WTC11 (cell line): ENCODE measurements at regions of chr12 and their contacts with region 1.

Region 1: DNA sequence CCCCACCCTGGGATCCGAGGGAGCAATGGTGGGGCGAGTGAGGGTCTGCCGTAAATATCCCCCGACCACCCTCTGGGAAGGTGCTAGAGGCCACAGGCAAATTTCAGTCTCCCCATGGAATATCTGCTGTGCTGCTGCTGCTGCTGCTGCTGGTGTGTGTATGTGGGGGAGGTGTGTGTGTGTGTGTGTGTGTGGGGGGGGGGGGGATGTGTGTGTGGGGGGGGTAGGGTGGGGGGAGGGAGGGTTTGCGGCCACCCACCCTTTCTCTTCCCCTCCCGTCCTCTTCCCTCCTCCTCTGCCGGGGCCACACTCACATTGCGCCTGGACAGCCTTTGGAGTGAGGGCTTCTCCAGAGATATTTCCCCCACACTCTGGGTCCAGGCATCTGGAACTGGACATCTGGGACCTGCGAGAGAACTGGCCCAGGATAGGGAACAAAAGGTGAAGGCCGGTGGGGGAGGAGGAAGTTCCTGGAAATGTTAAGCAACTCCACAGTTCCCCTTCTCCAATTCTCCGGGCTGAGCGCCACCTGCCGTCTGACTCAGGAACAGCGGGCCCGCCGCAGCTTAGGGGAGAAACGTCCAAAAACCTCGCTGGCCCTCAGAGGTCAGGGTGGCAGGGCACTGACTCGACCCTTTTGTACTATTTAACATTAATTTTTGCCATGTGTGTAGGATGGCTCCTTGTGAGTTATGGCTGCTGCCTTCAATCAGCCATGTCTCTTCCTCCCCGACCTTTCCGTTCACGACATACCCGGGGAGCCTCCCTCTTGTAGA is at the start of gene C1RL:
- DNase-seq: peak; percentile 95
- ATAC-seq: peak; percentile 60
- H3K4me3 Mint-ChIP-seq: peak within 1 kb of the TSS; percentile 89
- H3K27ac Mint-ChIP-seq: peak within 1 kb of the TSS; percentile 78
- H3K4me1 Mint-ChIP-seq: peaks cover 12% of the 10 kb centered on the region
- H3K27me3 Mint-ChIP-seq: no peaks in the 10 kb centered on the region
- CTCF ChIP-seq: peak; percentile 92
- total RNA-seq, gene C1RL: 17.7 to 23.7 TPM (median 22.9 TPM) in 3 replicates

Region 2: GRCh38 chr12:6944381-6945186 is 164.4 kb before region 1 on chr12:
- CTCF ChIA-PET with region 1: interaction called, 59 read pairs
- POLR2A ChIA-PET with region 1: interaction called, 19 read pairs
- DNase-seq: peak; percentile 92
- ATAC-seq: peak; percentile 25
- H3K4me3 Mint-ChIP-seq: peak overlapping the region; percentile 98
- H3K27ac Mint-ChIP-seq: peak overlapping the region; percentile 99
- H3K4me1 Mint-ChIP-seq: peaks cover 34% of the 10 kb centered on the region
- H3K27me3 Mint-ChIP-seq: no peaks in the 10 kb centered on the region
- CTCF ChIP-seq: no peak

Region 3: DNA sequence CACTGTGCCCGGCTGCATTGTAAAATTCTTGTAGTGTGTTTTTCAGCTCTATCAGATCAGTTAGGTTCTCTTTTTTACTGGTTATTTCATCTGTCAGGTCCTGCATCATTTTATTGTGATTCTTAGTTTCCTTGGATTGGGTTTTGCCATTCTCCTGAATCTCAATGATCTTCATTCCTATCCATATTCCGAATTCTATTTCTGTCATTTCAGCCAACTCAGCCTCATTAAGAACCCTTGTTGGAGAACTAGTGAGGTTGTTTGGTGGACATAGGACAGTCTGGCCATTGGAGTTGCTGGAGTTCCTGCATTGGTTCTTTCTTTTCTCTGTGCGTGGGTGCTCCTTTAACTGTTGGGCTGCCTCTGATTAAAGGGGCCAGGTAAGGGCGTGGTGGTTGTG is 54.1 kb before region 1 on chr12:
- CTCF ChIA-PET with region 1: interaction called, 29 read pairs
- POLR2A ChIA-PET with region 1: interaction called, 3 read pairs
- DNase-seq: no peak
- ATAC-seq: no peak
- H3K4me3 Mint-ChIP-seq: no peak overlapping the region
- H3K27ac Mint-ChIP-seq: 0 out of 2 replicates have a peak overlapping the region, but pooled peaks have one; percentile 51
- H3K4me1 Mint-ChIP-seq: peaks cover 5% of the 10 kb centered on the region
- H3K27me3 Mint-ChIP-seq: peaks cover 6% of the 10 kb centered on the region; the same call in 1 of the 2 replicates
- CTCF ChIP-seq: no peak

Region 4: GRCh38 chr12:7092229-7092985 is 16.6 kb before region 1 on chr12 and contains the start of gene C1R:
- CTCF ChIA-PET with region 1: interaction called, 63 read pairs
- POLR2A ChIA-PET with region 1: interaction called, 6 read pairs
- DNase-seq: peak; percentile 76
- ATAC-seq: peak; percentile 49
- H3K4me3 Mint-ChIP-seq: peak within 1 kb of the TSS; percentile 65
- H3K27ac Mint-ChIP-seq: peak within 1 kb of the TSS; percentile 79; the same call in 1 of the 2 replicates
- H3K4me1 Mint-ChIP-seq: peaks cover 34% of the 10 kb centered on the region
- H3K27me3 Mint-ChIP-seq: no peaks in the 10 kb centered on the region; the same call in none of the 2 replicates
- CTCF ChIP-seq: peak; percentile 82
- total RNA-seq, gene C1R: 8.4 to 9.8 TPM (median 8.9 TPM) in 3 replicates

Region 5: DNA sequence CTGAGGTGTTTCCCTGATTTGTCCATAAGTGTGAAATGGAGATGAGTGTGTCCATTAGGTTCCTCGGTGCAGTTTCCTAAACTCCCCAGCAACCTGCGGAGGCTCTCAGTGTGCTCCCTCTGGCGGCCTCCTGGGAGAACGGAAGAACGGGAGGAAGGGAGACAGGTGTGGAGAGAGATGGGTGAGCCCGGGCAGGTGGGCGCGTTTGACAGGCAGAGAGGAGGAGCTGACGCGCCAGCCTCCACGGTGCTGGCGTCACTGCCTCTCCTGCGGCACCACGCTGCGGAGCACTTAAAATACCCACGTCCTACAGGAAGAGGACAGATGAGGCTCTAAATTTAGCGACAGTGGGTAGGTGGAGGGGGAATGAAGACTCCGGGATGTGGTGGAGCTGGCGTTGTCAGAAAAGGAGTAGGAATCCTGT is 53.7 kb after region 1 on chr12:
- CTCF ChIA-PET with region 1: interaction called, 17 read pairs
- POLR2A ChIA-PET with region 1: no interaction called
- DNase-seq: peak; percentile 73
- ATAC-seq: peak; percentile 97
- H3K4me3 Mint-ChIP-seq: peak overlapping the region; percentile 44
- H3K27ac Mint-ChIP-seq: no peak overlapping the region
- H3K4me1 Mint-ChIP-seq: peaks cover 4% of the 10 kb centered on the region; the same call in 1 of the 2 replicates
- H3K27me3 Mint-ChIP-seq: peaks cover 48% of the 10 kb centered on the region
- CTCF ChIP-seq: peak; percentile 23; the same call in 1 of the 2 replicates

Region 6: DNA sequence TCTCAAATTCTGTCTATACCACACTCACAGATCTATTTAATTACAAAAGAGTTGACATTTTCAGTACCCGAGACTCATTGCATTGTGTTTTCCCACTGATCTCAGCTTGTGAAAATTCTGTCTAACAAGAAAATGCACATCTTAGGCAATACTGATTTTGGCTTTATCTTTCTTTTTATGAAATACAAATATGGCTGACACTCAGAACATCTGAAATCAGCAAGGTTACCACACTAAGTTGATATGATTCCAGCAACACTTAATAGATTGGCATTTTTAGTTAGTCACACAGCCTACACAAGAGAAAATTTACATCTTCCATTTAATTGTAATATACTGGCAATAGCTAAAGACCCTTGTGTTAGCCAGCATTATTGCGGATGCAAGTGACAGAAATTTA is 120.8 kb after region 1 on chr12:
- CTCF ChIA-PET with region 1: no interaction called
- POLR2A ChIA-PET with region 1: no interaction called
- DNase-seq: no peak
- ATAC-seq: no peak
- H3K4me3 Mint-ChIP-seq: no peak overlapping the region
- H3K27ac Mint-ChIP-seq: no peak overlapping the region
- H3K4me1 Mint-ChIP-seq: no peaks in the 10 kb centered on the region
- H3K27me3 Mint-ChIP-seq: no peaks in the 10 kb centered on the region
- CTCF ChIP-seq: no peak